ENCODE measurements at regions of chr5 and their contacts with region 1.

Region 1: GRCh38 chr5:145347026-145347616 is 488.0 kb downstream of the PRELID2 start:
- DNase-seq: peak; percentile 66
- H3K4me3 Mint-ChIP-seq: no peak overlapping the region
- H3K27ac Mint-ChIP-seq: no peak overlapping the region
- H3K4me1 Mint-ChIP-seq: peaks cover 11% of the 10 kb centered on the region
- H3K27me3 Mint-ChIP-seq: no peaks in the 10 kb centered on the region
- CTCF ChIP-seq: peak; percentile 88

Region 2: DNA sequence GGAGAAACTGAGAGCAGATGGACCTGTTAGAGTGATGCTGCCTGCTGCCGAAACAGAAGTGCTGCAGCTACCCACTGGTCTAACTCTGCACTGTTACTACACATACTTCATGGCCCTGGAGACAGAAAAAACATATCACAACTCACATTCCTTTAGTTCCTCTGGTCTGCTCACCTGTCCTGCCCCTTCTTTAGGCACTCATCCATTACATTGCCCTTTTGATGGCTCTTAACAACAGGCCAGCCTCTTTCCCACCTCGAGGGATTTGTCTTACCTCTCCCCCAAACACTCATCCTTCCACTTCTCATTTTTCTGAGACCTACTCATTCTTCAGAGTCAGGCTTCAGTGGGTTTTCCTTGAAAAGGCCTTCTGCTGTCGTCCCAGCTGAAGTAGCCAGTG is 1127.3 kb before region 1 on chr5:
- CTCF ChIA-PET with region 1: interaction called, 12 read pairs
- POLR2A ChIA-PET with region 1: no interaction called
- intact Hi-C with region 1: no loop called
- DNase-seq: no peak
- H3K4me3 Mint-ChIP-seq: no peak overlapping the region
- H3K27ac Mint-ChIP-seq: no peak overlapping the region
- H3K4me1 Mint-ChIP-seq: no peaks in the 10 kb centered on the region
- H3K27me3 Mint-ChIP-seq: peaks cover under 1% of the 10 kb centered on the region
- CTCF ChIP-seq: no peak

Region 3: GRCh38 chr5:144390133-144390532 is 957.0 kb before region 1 on chr5:
- CTCF ChIA-PET with region 1: interaction called, 4 read pairs
- POLR2A ChIA-PET with region 1: no interaction called
- intact Hi-C with region 1: loop called (anchors 1 kb)
- DNase-seq: peak; percentile 44
- H3K4me3 Mint-ChIP-seq: no peak overlapping the region
- H3K27ac Mint-ChIP-seq: no peak overlapping the region
- H3K4me1 Mint-ChIP-seq: peaks cover 9% of the 10 kb centered on the region
- H3K27me3 Mint-ChIP-seq: no peaks in the 10 kb centered on the region
- CTCF ChIP-seq: peak; percentile 43

Region 4: DNA sequence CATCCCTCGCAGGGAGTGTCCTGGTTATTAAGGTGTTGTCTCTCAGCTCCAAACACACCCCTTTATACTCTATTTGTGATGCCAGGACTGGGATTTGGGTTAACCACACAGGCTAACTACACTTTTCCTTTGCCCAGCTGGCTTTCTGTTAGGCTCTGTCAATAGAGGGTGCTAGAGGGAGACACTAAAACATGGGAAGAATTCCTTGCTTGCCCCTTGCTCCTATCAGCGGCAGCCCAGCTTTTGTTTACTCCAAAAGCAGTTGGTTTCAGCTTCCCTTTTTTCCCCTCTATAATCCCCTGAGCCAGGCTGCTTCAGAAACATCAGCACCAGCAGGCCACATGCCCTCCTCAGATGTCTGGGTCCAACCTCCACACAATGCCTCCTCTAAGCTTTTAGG is 879.3 kb before region 1 on chr5:
- CTCF ChIA-PET with region 1: interaction called, 46 read pairs
- POLR2A ChIA-PET with region 1: no interaction called
- intact Hi-C with region 1: loop called (anchors 1 kb)
- DNase-seq: peak; percentile 78
- H3K4me3 Mint-ChIP-seq: no peak overlapping the region
- H3K27ac Mint-ChIP-seq: no peak overlapping the region
- H3K4me1 Mint-ChIP-seq: no peaks in the 10 kb centered on the region
- H3K27me3 Mint-ChIP-seq: no peaks in the 10 kb centered on the region
- CTCF ChIP-seq: peak; percentile 82

Region 5: DNA sequence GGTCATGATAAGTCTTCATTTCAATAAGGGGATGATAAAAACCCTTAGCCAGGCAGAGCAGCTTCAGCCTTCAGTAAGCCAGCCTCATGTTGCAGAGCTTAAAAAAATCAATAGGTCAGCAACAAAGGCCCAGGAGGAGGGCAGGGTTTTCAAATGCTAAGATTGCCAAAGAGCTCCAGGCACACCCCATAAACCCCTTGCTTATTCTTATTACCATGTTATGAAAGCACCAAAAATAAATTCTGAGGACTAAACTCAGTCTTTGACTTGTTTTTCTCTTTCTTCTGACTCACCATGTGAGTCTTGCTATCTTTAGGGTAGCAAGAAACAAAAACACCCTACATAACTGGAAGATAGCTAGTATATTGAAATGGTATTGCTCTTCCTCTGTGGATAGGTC is 859.4 kb before region 1 on chr5:
- CTCF ChIA-PET with region 1: interaction called, 10 read pairs
- POLR2A ChIA-PET with region 1: no interaction called
- intact Hi-C with region 1: no loop called
- DNase-seq: no peak
- H3K4me3 Mint-ChIP-seq: no peak overlapping the region
- H3K27ac Mint-ChIP-seq: no peak overlapping the region
- H3K4me1 Mint-ChIP-seq: peaks cover 10% of the 10 kb centered on the region
- H3K27me3 Mint-ChIP-seq: no peaks in the 10 kb centered on the region
- CTCF ChIP-seq: no peak

Region 6: GRCh38 chr5:145237843-145238242 is 109.3 kb before region 1 on chr5:
- CTCF ChIA-PET with region 1: interaction called, 16 read pairs
- POLR2A ChIA-PET with region 1: no interaction called
- intact Hi-C with region 1: loop called (anchors 5 kb)
- DNase-seq: peak; percentile 90
- H3K4me3 Mint-ChIP-seq: no peak overlapping the region
- H3K27ac Mint-ChIP-seq: no peak overlapping the region
- H3K4me1 Mint-ChIP-seq: peaks cover 5% of the 10 kb centered on the region
- H3K27me3 Mint-ChIP-seq: no peaks in the 10 kb centered on the region
- CTCF ChIP-seq: peak; percentile 82

Region 7: GRCh38 chr5:145283101-145283810 is 63.9 kb before region 1 on chr5:
- CTCF ChIA-PET with region 1: no interaction called
- POLR2A ChIA-PET with region 1: no interaction called
- intact Hi-C with region 1: no loop called
- DNase-seq: peak; percentile 75
- H3K4me3 Mint-ChIP-seq: no peak overlapping the region
- H3K27ac Mint-ChIP-seq: peak overlapping the region; percentile 8
- H3K4me1 Mint-ChIP-seq: peaks cover 11% of the 10 kb centered on the region
- H3K27me3 Mint-ChIP-seq: no peaks in the 10 kb centered on the region
- CTCF ChIP-seq: no peak

Region 8: DNA sequence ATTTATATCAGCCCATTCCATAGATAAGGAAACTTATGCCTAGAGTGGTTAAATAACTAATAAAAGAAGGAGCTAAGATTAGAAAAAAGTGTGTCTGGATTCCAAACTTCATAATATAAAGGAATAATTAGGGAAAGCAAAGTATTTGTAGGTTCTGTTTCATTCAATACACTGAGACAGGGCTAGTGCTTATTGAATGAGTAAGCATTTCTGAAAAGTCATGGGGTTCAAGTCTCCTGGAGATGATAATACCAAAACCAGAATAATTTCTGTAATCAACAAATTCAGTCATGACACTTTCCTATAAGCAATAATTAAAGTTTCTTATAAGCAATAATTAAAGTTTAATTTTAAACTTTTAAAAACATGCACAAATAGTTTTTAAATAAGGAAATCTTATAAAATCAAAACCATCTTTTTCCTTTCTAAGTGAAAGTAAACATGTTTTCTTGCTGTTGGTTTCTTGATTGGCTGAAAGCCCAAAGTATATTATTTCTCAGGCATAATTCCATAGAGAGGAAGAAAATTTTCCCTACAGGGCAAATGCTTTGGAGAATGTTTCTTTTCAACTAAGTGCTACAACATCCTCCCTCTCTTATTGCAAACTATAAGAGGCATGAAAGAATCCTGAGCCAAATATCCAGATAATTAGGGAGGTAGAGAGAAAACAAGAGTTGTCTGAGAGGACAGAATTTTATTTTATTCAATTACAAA is 22.2 kb before region 1 on chr5:
- CTCF ChIA-PET with region 1: interaction called, 10 read pairs
- POLR2A ChIA-PET with region 1: interaction called, 3 read pairs
- intact Hi-C with region 1: no loop called
- DNase-seq: no peak
- H3K4me3 Mint-ChIP-seq: no peak overlapping the region
- H3K27ac Mint-ChIP-seq: no peak overlapping the region
- H3K4me1 Mint-ChIP-seq: peaks cover 6% of the 10 kb centered on the region
- H3K27me3 Mint-ChIP-seq: no peaks in the 10 kb centered on the region
- CTCF ChIP-seq: no peak

Measured in MCF 10A (cell line).